Prostate gland (tissue), 2 donors: ENCODE measurements at regions of chr6 and their contacts with region 1.

Region 1: GRCh38 chr6:136289579-136290409 is at the start of gene BCLAF1:
- DNase-seq: peak; percentile 100
- H3K4me3 ChIP-seq: peak within 1 kb of the TSS; percentile 87 to 90
- H3K27ac ChIP-seq: peak within 1 kb of the TSS; percentile 99
- H3K4me1 ChIP-seq: peaks cover 10% of the 10 kb centered on the region
- H3K27me3 ChIP-seq: no peaks in the 10 kb centered on the region
- CTCF ChIP-seq: peak in 2 of 4 experiments; percentile 26 to 33
- POLR2A ChIP-seq: peak; percentile 97
- total RNA-seq, gene BCLAF1: 83.0 to 136 TPM

Region 2: DNA sequence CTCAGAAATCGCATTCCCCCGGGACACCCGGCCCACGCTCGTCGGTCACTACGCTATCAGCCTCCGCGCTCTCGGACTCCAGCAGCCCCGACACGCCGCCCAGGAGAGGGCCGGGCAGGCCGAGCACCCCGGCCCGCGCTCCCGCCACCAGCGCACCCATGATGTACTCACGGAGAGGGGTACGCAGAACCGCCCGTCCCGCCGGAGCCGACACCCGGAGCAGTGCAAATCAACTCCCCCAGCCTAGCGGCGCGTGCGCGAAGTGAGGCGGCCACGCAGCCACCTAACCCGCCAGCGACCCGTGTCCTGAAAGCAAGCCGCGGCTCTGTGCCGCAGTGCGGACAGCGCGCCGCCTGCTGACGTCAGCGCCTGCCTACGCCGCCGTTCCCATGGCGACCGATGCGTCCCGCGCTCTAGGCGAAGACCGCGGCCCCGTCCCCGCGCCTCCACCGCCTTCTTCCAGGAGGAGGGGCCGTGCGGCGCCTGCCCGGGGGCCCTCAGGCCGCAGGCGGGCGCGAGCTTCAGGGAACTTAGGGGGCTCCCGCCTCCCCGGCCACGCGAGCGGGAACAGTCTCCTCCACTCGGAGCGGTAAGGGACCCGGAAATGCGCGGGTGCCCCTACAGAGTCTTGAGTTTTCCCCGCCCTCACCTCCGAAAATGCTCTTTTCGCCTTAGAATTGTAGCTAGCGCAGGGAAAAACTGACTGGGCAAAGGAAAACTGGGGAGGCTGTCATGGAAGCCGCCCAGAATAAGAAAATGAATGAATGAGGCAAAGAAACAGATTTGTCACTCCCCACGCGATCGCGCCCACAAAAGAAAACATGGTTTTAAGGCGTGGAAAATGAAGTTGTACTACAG is 792.2 kb before region 1 on chr6 and contains the start of gene AHI1:
- intact Hi-C with region 1: loop called (anchors 1 kb)
- DNase-seq: peak; percentile 93
- H3K4me3 ChIP-seq: peak within 1 kb of the TSS; percentile 79 to 84
- H3K27ac ChIP-seq: peak within 1 kb of the TSS; percentile 99
- H3K4me1 ChIP-seq: no peaks in the 10 kb centered on the region
- H3K27me3 ChIP-seq: no peaks in the 10 kb centered on the region
- CTCF ChIP-seq: peak in 2 of 4 experiments; percentile 57 to 58
- POLR2A ChIP-seq: peak; percentile 98
- total RNA-seq, gene AHI1: 18.0 to 37.9 TPM

Region 3: GRCh38 chr6:136249811-136250685 is 39.7 kb before region 1 on chr6 and contains the start of gene MTFR2:
- intact Hi-C with region 1: loop called (anchors 5 kb)
- DNase-seq: peak; percentile 97
- H3K4me3 ChIP-seq: peak within 1 kb of the TSS; percentile 39 to 43
- H3K27ac ChIP-seq: peak within 1 kb of the TSS; percentile 31 to 36
- H3K4me1 ChIP-seq: no peaks in the 10 kb centered on the region
- H3K27me3 ChIP-seq: no peaks in the 10 kb centered on the region
- CTCF ChIP-seq: no peak
- POLR2A ChIP-seq: peak; percentile 30
- total RNA-seq, gene MTFR2: 1.1 to 2.9 TPM

Region 4: GRCh38 chr6:136383268-136383937 is 93.6 kb after region 1 on chr6:
- intact Hi-C with region 1: no loop called
- DNase-seq: no peak
- H3K4me3 ChIP-seq: no peak overlapping the region
- H3K27ac ChIP-seq: no peak overlapping the region
- H3K4me1 ChIP-seq: no peaks in the 10 kb centered on the region
- H3K27me3 ChIP-seq: no peaks in the 10 kb centered on the region
- CTCF ChIP-seq: no peak
- POLR2A ChIP-seq: no peak